ENCODE measurements at regions of chr7 and their contacts with region 1.

Region 1: DNA sequence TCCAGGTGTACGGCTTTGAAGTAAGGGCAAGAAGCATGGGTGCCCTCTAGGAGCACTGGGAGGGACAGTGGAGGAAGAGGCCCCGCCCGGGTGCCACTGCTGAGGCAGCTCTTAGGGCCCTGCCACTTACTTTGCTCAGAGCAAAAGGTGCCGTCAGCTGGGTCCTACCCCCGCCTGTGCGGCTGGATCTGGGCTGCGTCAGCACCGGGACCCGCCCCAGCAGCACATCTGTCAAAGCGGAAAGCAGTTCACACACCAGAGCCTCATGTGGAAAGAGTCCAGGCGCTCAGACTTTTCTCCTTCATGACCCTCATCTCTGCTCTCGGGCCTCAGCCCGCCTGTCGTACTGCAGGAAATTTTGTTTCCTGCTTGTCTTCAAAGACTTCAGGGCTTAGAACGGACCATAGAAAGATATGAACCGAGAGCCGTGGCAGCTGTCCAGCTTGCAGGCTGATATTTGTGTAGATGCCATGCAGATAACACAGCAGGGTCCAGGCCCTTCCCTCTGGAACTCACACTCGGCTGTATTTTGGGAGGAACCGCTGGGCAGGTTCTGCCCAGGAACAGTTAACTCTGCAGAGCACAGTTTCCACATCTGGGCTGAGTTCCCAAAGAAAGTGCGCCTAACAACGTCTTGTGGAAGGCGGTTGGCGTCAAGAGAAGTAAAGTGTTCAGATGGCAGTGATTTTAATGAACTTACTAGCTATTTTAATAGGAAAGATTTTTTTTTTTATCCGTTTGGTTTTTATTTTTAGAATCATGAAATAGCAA is 44.3 kb upstream of the PRKAR1B start:
- DNase-seq: no peak
- H3K4me3 ChIP-seq: no peak overlapping the region
- H3K27ac ChIP-seq: peak overlapping the region; percentile 22 to 82 (median 78)
- H3K4me1 ChIP-seq: peaks cover 0 to 28% (median 7%) of the 10 kb centered on the region in 3 donors
- H3K27me3 ChIP-seq: no peaks in the 10 kb centered on the region
- CTCF ChIP-seq: no peak
- POLR2A ChIP-seq: no peak

Region 2: DNA sequence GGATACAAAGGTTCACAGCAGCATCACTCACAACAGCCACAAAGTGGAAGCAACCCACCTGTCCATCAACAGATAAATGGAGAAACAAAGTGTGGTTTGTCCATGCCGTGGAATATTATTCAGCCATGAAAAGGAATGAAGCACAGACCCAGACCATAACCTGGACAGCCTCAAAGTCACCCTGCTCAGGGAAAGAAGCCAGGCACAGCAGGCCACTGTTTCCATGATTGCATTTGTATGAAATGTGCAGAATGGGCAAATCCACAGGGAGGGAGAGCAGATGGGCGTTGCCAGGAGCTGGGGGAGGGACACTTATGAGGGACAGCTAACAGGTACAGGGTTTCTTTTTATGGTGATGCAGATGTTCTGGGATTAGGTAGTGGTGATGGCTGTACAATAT is 451.1 kb before region 1 on chr7:
- intact Hi-C with region 1: loop called (anchors 2 kb)
- DNase-seq: no peak
- H3K4me3 ChIP-seq: no peak overlapping the region
- H3K27ac ChIP-seq: no peak overlapping the region
- H3K4me1 ChIP-seq: peaks cover 0 to 27% (median 0%) of the 10 kb centered on the region in 3 donors
- H3K27me3 ChIP-seq: peaks cover 0 to 61% (median 0%) of the 10 kb centered on the region in 4 donors
- CTCF ChIP-seq: no peak
- POLR2A ChIP-seq: no peak

Region 3: DNA sequence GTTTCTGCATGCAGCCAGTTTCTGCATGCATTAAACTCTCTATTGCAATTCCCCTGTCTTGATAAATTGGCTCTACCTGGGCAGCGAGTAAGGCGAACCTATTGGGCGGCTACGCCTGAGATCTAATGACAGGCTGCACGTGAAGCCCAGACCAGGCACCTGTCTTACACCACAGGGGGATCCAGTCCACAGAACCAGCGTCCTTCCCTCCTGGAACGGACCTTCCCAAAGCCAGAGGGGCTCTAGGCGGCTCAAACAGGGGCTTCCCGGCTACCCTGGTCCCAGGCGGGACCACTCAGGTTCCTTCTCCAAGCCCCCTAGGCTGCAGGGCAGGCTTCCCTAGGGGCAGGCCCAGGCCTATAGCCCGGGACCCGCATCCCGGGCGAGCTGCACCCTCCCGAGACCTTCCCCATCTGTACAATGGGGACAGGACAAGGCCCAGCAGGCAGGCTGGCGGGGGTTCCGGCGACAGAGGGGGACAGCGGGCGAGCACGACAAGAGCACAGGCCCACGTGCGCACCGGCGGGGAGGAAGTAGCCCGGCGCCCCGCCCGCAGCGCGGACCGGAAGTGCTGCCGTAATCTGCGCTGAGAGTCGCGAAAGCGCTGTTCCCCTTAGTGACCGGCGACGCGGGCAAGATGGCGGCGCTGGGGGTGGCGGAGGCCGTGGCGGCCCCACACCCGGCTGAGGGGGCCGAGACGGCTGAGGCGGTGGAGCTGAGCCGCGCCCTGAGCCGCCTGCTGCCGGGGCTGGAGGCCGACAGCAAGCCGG is 45.1 kb before region 1 on chr7 and contains the start of gene DNAAF5:
- intact Hi-C with region 1: no loop called
- DNase-seq: peak; percentile 31
- H3K4me3 ChIP-seq: peak within 1 kb of the TSS; percentile 74 to 98 (median 96)
- H3K27ac ChIP-seq: peak within 1 kb of the TSS; percentile 69 to 85 (median 82)
- H3K4me1 ChIP-seq: peaks cover 15 to 30% (median 17%) of the 10 kb centered on the region in 3 donors
- H3K27me3 ChIP-seq: no peaks in the 10 kb centered on the region
- CTCF ChIP-seq: peak in 2 of 6 experiments; percentile 1 to 6
- POLR2A ChIP-seq: peak in 2 of 4 donors; percentile 15 to 24
- total RNA-seq, gene DNAAF5: 23.7 to 30.1 (median 28.2) TPM